Breast epithelium (tissue), 4 donors: ENCODE measurements at regions of chr6 and their contacts with region 1.

Region 1: DNA sequence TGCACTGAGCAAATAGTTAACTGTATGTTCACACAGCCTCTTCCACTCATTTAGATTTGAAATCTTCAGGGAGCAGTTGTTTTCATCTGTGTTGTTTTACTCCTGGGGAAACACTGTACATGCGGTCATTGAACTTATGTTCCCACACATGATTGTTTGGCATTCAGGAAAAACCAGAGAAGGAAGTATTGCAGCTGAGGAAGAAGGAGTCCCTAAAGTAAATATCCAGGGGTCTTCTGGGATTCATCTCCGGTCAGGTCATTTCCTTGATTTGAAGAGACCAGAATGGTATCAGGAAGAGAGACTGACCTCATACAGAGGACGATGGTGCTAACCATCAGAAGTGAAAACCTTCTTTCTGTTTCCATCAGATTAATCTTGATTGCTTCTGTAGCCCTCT is 52.5 kb downstream of the DCBLD1 start:
- DNase-seq: no peak
- H3K4me3 ChIP-seq: no peak overlapping the region
- H3K27ac ChIP-seq: no peak overlapping the region
- H3K4me1 ChIP-seq: no peaks in the 10 kb centered on the region
- H3K27me3 ChIP-seq: no peaks in the 10 kb centered on the region
- CTCF ChIP-seq: no peak
- POLR2A ChIP-seq: no peak

Region 2: GRCh38 chr6:117498159-117498558 is 36.8 kb before region 1 on chr6:
- intact Hi-C with region 1: loop called (anchors 2 kb)
- DNase-seq: no peak
- H3K4me3 ChIP-seq: no peak overlapping the region
- H3K27ac ChIP-seq: peak overlapping the region in 1 of 2 donors; percentile 41
- H3K4me1 ChIP-seq: no peaks in the 10 kb centered on the region
- H3K27me3 ChIP-seq: no peaks in the 10 kb centered on the region
- CTCF ChIP-seq: no peak
- POLR2A ChIP-seq: no peak